ENCODE measurements at regions of chr10 and their contacts with region 1.

Region 1: GRCh38 chr10:33330543-33331378 is 3.7 kb downstream of the NRP1 start:
- DNase-seq: peak; percentile 82
- H3K4me3 ChIP-seq: no peak overlapping the region
- H3K27ac ChIP-seq: no peak overlapping the region
- H3K4me1 ChIP-seq: no peaks in the 10 kb centered on the region
- H3K27me3 ChIP-seq: no peaks in the 10 kb centered on the region
- CTCF ChIP-seq: peak; percentile 67 to 92 (median 81)
- POLR2A ChIP-seq: no peak

Region 2: GRCh38 chr10:33143160-33143728 is 187.5 kb before region 1 on chr10:
- intact Hi-C with region 1: no loop called
- DNase-seq: no peak
- H3K4me3 ChIP-seq: no peak overlapping the region
- H3K27ac ChIP-seq: no peak overlapping the region
- H3K4me1 ChIP-seq: no peaks in the 10 kb centered on the region
- H3K27me3 ChIP-seq: no peaks in the 10 kb centered on the region
- CTCF ChIP-seq: no peak
- POLR2A ChIP-seq: no peak

Region 3: GRCh38 chr10:33193057-33193700 is 137.6 kb before region 1 on chr10:
- intact Hi-C with region 1: loop called (anchors 5 kb)
- DNase-seq: peak; percentile 83
- H3K4me3 ChIP-seq: no peak overlapping the region
- H3K27ac ChIP-seq: peak overlapping the region; percentile 1 to 45
- H3K4me1 ChIP-seq: peaks cover 7% of the 10 kb centered on the region
- H3K27me3 ChIP-seq: no peaks in the 10 kb centered on the region
- CTCF ChIP-seq: peak; percentile 57 to 77 (median 75)
- POLR2A ChIP-seq: no peak

Region 4: GRCh38 chr10:33489501-33490176 is 158.9 kb after region 1 on chr10:
- intact Hi-C with region 1: loop called (anchors 10 kb)
- DNase-seq: no peak
- H3K4me3 ChIP-seq: no peak overlapping the region
- H3K27ac ChIP-seq: no peak overlapping the region
- H3K4me1 ChIP-seq: no peaks in the 10 kb centered on the region
- H3K27me3 ChIP-seq: no peaks in the 10 kb centered on the region
- CTCF ChIP-seq: no peak
- POLR2A ChIP-seq: no peak

Region 5: DNA sequence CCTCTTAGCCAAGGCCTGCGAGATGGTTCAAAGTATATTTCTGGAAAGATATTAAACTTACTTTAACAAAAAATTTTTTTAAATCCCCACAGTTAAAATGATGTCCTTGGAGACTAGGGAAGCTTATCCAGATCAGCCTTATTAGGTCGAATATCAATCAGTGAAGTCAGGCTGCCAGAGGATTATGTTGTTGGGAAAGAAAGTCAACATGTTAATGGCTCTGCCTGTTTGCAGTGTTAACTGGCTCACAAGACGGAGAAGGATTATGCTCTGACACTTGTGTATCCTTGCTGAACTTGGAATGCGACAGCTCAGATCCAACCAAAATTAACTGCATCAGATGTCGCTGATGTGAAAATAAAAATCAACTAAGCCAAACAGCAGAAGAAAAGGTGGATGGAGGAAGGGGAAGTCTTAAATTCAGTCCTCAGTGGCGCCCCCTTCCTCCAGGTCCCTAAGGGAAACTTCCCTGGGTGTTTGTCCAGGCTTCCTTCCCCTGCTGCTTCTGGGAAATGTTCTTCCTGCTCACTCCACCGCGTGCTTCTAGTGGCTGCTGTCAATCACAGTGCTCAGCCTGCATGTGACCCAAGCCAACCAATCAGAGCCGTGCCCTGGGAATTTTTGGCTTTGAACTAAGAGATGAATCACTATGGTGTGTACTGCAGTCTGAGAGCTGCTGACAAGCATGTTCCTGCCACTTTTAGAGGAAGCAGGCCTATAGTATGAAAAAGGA is 694.1 kb after region 1 on chr10:
- intact Hi-C with region 1: loop called (anchors 10 kb)
- DNase-seq: no peak
- H3K4me3 ChIP-seq: no peak overlapping the region
- H3K27ac ChIP-seq: no peak overlapping the region
- H3K4me1 ChIP-seq: no peaks in the 10 kb centered on the region
- H3K27me3 ChIP-seq: no peaks in the 10 kb centered on the region
- CTCF ChIP-seq: no peak
- POLR2A ChIP-seq: no peak

Region 6: GRCh38 chr10:34102237-34102673 is 771.5 kb after region 1 on chr10:
- intact Hi-C with region 1: loop called (anchors 10 kb)
- DNase-seq: peak; percentile 25
- H3K4me3 ChIP-seq: no peak overlapping the region
- H3K27ac ChIP-seq: peak overlapping the region; percentile 1 to 14
- H3K4me1 ChIP-seq: no peaks in the 10 kb centered on the region
- H3K27me3 ChIP-seq: no peaks in the 10 kb centered on the region
- CTCF ChIP-seq: no peak
- POLR2A ChIP-seq: no peak

Region 7: DNA sequence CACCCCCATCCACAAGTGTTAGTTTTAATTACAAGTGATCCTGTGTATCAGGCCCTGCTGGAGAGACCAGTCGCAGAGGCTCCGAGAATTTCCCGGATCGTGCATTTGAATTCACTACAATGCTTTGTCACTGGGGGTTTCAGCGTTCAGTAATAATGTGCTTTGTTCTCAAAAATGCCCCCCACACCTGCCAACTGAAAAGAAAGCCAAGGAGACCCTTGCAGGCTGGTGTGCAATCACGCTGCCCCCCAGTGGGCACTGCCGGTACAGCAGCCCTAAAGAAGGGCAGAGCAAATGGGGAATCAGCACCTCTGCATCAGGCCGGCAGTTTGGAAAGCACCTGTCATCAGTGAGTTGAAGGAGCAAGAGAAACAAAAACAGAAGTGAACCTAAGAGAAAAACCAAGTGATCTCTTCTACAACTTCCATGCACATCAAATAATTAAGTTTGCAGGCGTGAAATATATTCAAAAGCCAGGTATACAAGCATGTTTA is 1306.7 kb after region 1 on chr10:
- intact Hi-C with region 1: loop called (anchors 1 kb)
- DNase-seq: peak; percentile 52
- H3K4me3 ChIP-seq: no peak overlapping the region
- H3K27ac ChIP-seq: no peak overlapping the region
- H3K4me1 ChIP-seq: peaks cover 6% of the 10 kb centered on the region
- H3K27me3 ChIP-seq: no peaks in the 10 kb centered on the region
- CTCF ChIP-seq: peak; percentile 80 to 92 (median 83)
- POLR2A ChIP-seq: no peak

Measured in prostate gland (tissue), 2 donors.